Sigmoid colon (tissue), 7 donors: ENCODE measurements at regions of chr15 and their contacts with region 1.

Region 1: GRCh38 chr15:68589783-68590710 is 11.3 kb downstream of the CORO2B start:
- DNase-seq: no peak
- H3K4me3 ChIP-seq: no peak overlapping the region
- H3K27ac ChIP-seq: peak overlapping the region in 3 of 4 donors; percentile 2 to 57 (median 18)
- H3K4me1 ChIP-seq: peaks cover 0 to 52% (median 10%) of the 10 kb centered on the region in 4 donors
- H3K27me3 ChIP-seq: no peaks in the 10 kb centered on the region
- CTCF ChIP-seq: no peak
- EP300 ChIP-seq: no peak
- POLR2A ChIP-seq: no peak

Region 2: DNA sequence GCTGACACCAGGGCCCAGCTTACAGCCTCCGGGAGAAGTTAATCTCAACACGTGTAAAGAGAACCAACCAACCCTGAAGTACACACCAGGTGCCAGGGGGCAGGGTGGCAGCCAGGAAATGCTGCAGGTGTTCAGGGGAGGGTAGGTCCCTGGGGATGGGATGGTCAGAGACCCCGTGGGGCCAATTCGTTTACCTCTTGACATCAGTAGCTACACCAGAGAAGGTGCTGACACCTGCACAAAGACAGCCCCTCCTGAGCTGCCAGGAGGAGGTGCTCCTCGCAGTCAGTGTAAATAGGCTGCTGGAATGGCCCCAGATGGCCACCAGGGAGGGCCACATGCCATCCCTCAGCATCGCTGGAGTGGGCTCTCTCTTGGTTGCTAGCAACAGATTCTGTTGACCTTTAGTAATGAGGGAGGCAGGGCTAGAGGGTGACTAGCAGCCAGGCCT is 41.6 kb after region 1 on chr15:
- intact Hi-C with region 1: loop called (anchors 5 kb)
- DNase-seq: no peak
- H3K4me3 ChIP-seq: no peak overlapping the region
- H3K27ac ChIP-seq: no peak overlapping the region
- H3K4me1 ChIP-seq: peaks cover 0 to 11% (median 2%) of the 10 kb centered on the region in 4 donors
- H3K27me3 ChIP-seq: no peaks in the 10 kb centered on the region
- CTCF ChIP-seq: no peak
- EP300 ChIP-seq: no peak
- POLR2A ChIP-seq: no peak